PC-3 (cell line): ENCODE measurements at regions of chrX and their contacts with region 1.

Region 1: GRCh38 chrX:106791495-106791894 is 11.0 kb upstream of the TBC1D8B start:
- DNase-seq: peak; percentile 43
- ATAC-seq: no peak
- H3K4me3 ChIP-seq: no peak overlapping the region
- H3K27ac ChIP-seq: no peak overlapping the region
- H3K4me1 ChIP-seq: no peaks in the 10 kb centered on the region
- H3K27me3 ChIP-seq: peaks cover 6% of the 10 kb centered on the region; the same call in 1 of the 2 replicates
- CTCF ChIP-seq: peak; percentile 63

Region 2: GRCh38 chrX:106415276-106415895 is 376.1 kb before region 1 on chrX:
- CTCF ChIA-PET with region 1: no interaction called
- POLR2A ChIA-PET with region 1: no interaction called
- intact Hi-C with region 1: loop called (anchors 5 kb)
- DNase-seq: peak; percentile 50
- ATAC-seq: peak; percentile 37; the same call in 1 of the 2 replicates
- H3K4me3 ChIP-seq: no peak overlapping the region
- H3K27ac ChIP-seq: no peak overlapping the region
- H3K4me1 ChIP-seq: no peaks in the 10 kb centered on the region
- H3K27me3 ChIP-seq: no peaks in the 10 kb centered on the region
- CTCF ChIP-seq: peak; percentile 75

Region 3: GRCh38 chrX:106481341-106481740 is 310.2 kb before region 1 on chrX:
- CTCF ChIA-PET with region 1: no interaction called
- POLR2A ChIA-PET with region 1: no interaction called
- intact Hi-C with region 1: loop called (anchors 1 kb)
- DNase-seq: peak; percentile 83
- ATAC-seq: peak; percentile 74
- H3K4me3 ChIP-seq: no peak overlapping the region
- H3K27ac ChIP-seq: no peak overlapping the region
- H3K4me1 ChIP-seq: no peaks in the 10 kb centered on the region
- H3K27me3 ChIP-seq: no peaks in the 10 kb centered on the region
- CTCF ChIP-seq: peak; percentile 77

Region 4: GRCh38 chrX:106728337-106728736 is 63.2 kb before region 1 on chrX:
- CTCF ChIA-PET with region 1: no interaction called
- POLR2A ChIA-PET with region 1: no interaction called
- intact Hi-C with region 1: loop called (anchors 2 kb)
- DNase-seq: no peak
- ATAC-seq: no peak
- H3K4me3 ChIP-seq: no peak overlapping the region
- H3K27ac ChIP-seq: no peak overlapping the region
- H3K4me1 ChIP-seq: peaks cover 4% of the 10 kb centered on the region; the same call in 1 of the 2 replicates
- H3K27me3 ChIP-seq: peaks cover 62% of the 10 kb centered on the region
- CTCF ChIP-seq: no peak